OCI-LY7 (cell line): ENCODE measurements at regions of chrX and their contacts with region 1.

Region 1: DNA sequence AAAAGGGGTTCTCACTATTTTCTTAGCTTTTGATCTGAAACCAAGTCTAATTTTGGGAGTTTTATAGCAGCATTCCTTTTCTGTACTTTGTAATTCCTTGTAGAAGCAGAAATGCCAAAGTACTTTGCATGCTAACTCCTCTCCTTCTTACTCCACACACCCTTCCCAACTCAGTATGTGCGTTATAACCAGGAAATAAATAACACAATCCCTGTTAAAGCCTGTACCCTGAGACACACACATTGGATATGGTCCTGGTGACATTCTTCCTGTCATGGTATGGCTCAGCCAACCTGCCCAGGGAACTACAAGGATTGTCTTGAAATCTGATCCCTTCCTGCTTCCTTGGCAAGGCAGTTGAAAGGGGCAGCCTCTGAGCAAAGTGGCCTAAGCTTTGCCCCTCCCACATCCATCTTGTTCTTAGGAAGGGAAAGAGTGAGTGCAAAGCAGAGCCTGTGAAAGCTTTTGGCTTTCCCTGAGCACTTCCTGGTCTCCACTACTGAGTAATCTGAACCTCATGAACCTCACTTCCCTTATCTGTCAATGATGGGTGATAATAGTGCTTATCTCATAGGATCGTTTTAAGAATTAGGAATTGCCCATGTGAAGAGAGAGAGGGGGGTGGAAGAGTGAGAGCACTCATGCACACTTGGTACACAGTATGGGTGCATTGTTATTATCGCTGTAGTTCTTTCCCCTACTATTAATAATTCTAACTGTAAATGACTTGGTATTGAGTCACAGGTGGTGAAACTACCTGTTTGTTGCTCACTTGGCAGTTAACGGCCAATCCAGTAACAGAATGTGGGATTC is 109.3 kb downstream of the AFF2 start:
- DNase-seq: peak; percentile 86
- H3K4me3 ChIP-seq: peak overlapping the region; percentile 60
- H3K27ac ChIP-seq: peak overlapping the region; percentile 99
- H3K4me1 ChIP-seq: peaks cover 61% of the 10 kb centered on the region
- CTCF ChIP-seq: no peak

Region 2: GRCh38 chrX:148541544-148541983 is 68.2 kb before region 1 on chrX:
- CTCF ChIA-PET with region 1: no interaction called
- POLR2A ChIA-PET with region 1: interaction called, 10 read pairs
- intact Hi-C with region 1: loop called (anchors 1 kb)
- DNase-seq: peak; percentile 58
- H3K4me3 ChIP-seq: peak overlapping the region; percentile 56
- H3K27ac ChIP-seq: peak overlapping the region; percentile 96
- H3K4me1 ChIP-seq: peaks cover 97% of the 10 kb centered on the region
- CTCF ChIP-seq: no peak

Region 3: GRCh38 chrX:148593987-148594386 is 15.7 kb before region 1 on chrX:
- CTCF ChIA-PET with region 1: no interaction called
- POLR2A ChIA-PET with region 1: interaction called, 24 read pairs
- intact Hi-C with region 1: no loop called
- DNase-seq: no peak
- H3K4me3 ChIP-seq: no peak overlapping the region
- H3K27ac ChIP-seq: no peak overlapping the region
- H3K4me1 ChIP-seq: peaks cover 61% of the 10 kb centered on the region
- CTCF ChIP-seq: no peak

Region 4: DNA sequence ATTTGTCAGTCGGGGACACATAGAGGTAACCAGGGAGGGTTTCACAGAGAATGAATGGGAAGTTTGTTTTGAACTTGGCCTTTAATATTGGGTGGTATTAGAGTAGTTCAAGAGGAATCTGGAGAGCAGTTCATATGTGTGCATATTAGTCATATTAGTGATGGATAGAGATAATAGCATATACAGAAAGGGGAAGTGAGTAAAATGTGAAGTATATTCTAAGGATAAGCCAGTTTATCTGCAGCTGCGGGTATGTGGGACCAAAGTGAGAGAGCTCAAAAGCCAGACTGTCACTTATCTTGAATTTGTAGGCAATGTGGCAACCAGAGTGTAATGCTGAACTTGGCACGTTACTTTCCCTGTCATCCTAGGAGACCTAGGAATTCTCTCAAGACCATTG is 60.6 kb after region 1 on chrX:
- CTCF ChIA-PET with region 1: no interaction called
- POLR2A ChIA-PET with region 1: no interaction called
- intact Hi-C with region 1: loop called (anchors 5 kb)
- DNase-seq: peak; percentile 53
- H3K4me3 ChIP-seq: no peak overlapping the region
- H3K27ac ChIP-seq: peak overlapping the region; percentile 41
- H3K4me1 ChIP-seq: peaks cover 35% of the 10 kb centered on the region
- CTCF ChIP-seq: no peak